ENCODE measurements at regions of chr1 and their contacts with region 1.

Region 1: DNA sequence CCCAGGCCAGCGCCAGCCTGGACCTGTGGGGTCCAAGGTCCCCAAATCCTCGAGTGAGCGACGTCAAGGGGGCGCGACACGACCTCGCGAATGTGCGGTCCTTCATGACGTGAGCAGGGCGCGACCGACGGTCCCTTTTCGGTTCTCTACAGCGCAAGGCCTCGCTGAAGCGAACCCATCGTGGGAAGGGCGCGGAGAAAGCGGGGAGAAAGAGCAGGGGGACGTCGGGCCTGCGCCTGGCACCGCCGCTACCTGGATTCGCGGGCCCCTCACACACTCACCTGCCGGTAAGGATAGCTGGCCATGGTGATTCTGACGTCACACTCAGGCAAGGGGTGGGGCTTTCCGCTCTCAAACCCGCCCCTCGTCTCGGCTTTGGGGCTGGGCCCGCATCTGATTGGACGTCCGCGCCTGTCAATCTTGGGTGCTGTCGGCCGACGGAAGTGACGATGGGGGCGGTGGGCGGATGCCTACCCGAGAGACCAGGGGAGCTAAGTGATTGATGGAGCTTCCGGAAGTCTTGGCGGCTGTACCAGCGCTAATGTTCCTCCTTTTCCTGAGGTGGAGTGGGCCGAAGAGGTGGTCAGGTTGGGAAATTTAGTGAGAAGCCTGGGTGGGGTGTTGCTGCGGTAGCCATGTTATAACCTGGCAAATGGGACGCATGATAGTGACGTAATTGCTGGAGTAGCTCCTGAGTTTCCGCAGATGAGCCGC is at the start of gene PEF1:
- DNase-seq: peak; percentile 99 to 100 (median 99)
- ATAC-seq: peak; percentile 91
- H3K4me3 ChIP-seq: peak within 1 kb of the TSS; percentile 92 to 97
- H3K4me3 Mint-ChIP-seq: peak within 1 kb of the TSS; percentile 100
- H3K27ac ChIP-seq: peak within 1 kb of the TSS; percentile 99
- H3K27ac Mint-ChIP-seq: peak within 1 kb of the TSS; percentile 100
- H3K4me1 ChIP-seq: peaks cover 30% of the 10 kb centered on the region
- H3K4me1 Mint-ChIP-seq: peaks cover 40% of the 10 kb centered on the region
- H3K27me3 ChIP-seq: no peaks in the 10 kb centered on the region
- H3K27me3 Mint-ChIP-seq: no peaks in the 10 kb centered on the region
- CTCF ChIP-seq: no peak
- total RNA-seq, gene PEF1: 35.8 to 36.6 TPM

Region 2: GRCh38 chr1:31065310-31066217 is 579.2 kb before region 1 on chr1 and contains the start of gene PUM1:
- CTCF ChIA-PET with region 1: no interaction called
- POLR2A ChIA-PET with region 1: no interaction called
- intact Hi-C with region 1: loop called in 1 of 2 experiments (anchors 10 kb)
- DNase-seq: peak; percentile 97 to 99 (median 98)
- ATAC-seq: peak; percentile 97
- H3K4me3 ChIP-seq: peak within 1 kb of the TSS; percentile 79
- H3K4me3 Mint-ChIP-seq: peak within 1 kb of the TSS; percentile 97
- H3K27ac ChIP-seq: peak within 1 kb of the TSS; percentile 83 to 94
- H3K27ac Mint-ChIP-seq: peak within 1 kb of the TSS; percentile 99
- H3K4me1 ChIP-seq: peaks cover 28% of the 10 kb centered on the region
- H3K4me1 Mint-ChIP-seq: peaks cover 27% of the 10 kb centered on the region
- H3K27me3 ChIP-seq: no peaks in the 10 kb centered on the region
- H3K27me3 Mint-ChIP-seq: no peaks in the 10 kb centered on the region
- CTCF ChIP-seq: no peak
- total RNA-seq, gene PUM1: 190 to 191 TPM

Region 3: DNA sequence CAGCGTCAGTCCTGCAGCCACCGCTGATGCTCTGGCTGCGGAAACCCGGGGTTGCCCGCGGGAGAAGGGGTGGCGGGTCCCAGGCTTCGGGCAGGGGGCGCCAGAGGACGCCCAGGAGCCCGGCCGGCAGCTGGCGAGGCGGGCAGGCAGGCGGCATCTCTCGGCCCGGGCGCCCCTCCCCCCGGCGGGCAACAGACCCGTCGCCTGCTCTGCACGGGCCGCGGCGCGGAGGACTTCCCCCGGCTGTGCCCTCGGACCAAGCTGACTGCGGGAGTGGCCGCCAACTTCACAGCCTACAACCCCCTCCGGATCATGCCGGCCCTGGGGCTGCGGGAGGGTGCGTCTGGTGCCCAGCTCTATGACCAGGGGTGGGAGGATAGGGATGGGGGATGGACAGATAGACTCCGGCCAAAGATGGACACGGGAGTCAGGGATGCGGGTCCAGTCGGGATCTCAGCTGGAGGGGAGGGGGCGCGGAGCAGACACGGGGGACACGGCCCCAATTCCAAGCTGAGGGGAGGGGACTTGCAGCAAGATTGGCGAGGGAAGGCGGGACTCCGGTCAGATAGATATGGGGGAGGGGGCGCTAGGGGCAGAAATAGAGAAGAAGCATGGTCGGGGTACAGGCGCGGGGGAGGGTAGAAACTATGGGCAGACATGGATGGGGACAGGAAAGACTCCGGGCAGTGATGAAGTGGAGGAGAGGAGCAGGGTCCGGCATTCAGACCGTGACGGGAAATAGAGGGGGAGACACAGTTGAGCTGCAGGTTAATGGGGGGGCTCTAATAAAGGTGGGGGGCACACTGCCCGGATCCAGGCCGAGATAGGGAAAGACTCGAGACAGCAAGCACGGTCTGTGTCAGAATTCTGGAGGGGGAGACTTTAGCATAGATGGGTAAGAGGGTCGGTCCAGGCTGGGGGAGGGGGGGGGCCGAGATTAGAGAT is 118.3 kb after region 1 on chr1:
- CTCF ChIA-PET with region 1: no interaction called
- POLR2A ChIA-PET with region 1: interaction called, 3 read pairs
- intact Hi-C with region 1: loop called (anchors 2 to 5 kb)
- DNase-seq: peak; percentile 39 to 86 (median 69)
- ATAC-seq: peak; percentile 43
- H3K4me3 ChIP-seq: peak overlapping the region; percentile 41 to 57
- H3K4me3 Mint-ChIP-seq: peak overlapping the region; percentile 80
- H3K27ac ChIP-seq: no peak overlapping the region
- H3K27ac Mint-ChIP-seq: no peak overlapping the region
- H3K4me1 ChIP-seq: peaks cover 40% of the 10 kb centered on the region
- H3K4me1 Mint-ChIP-seq: peaks cover 29% of the 10 kb centered on the region
- H3K27me3 ChIP-seq: peaks cover 11 to 14% of the 10 kb centered on the region in 2 experiments
- H3K27me3 Mint-ChIP-seq: peaks cover 11% of the 10 kb centered on the region
- CTCF ChIP-seq: peak; percentile 45

Region 4: DNA sequence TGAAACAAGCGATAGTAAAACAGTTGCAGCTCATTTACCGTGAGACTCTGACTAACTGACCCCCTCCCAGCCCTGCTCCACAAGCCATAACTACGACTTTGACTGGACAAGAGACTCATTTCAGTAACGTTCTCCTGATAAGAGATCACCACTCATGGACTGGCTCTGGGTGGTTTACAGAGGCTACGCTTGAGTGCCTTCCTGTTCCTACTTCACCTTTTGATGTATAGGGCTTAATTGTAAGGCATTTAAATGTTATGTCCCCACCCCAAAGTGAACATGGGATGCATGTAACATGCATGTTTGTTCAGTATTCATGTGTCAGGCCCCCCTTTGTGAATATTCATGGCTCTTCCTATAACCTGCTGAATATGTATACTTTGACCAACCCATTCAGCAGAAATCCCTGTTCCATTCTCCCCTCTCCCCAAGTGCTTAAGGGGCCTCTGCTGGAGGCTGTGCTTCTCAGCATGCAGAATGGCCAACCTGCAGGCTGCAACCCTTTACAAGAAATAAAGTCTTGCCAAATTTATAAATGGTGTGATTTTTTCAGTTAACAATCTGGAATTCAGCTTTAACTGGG is 221.8 kb after region 1 on chr1:
- CTCF ChIA-PET with region 1: no interaction called
- POLR2A ChIA-PET with region 1: no interaction called
- intact Hi-C with region 1: no loop called
- DNase-seq: no peak
- ATAC-seq: no peak
- H3K4me3 ChIP-seq: no peak overlapping the region
- H3K4me3 Mint-ChIP-seq: no peak overlapping the region
- H3K27ac ChIP-seq: no peak overlapping the region
- H3K27ac Mint-ChIP-seq: no peak overlapping the region
- H3K4me1 ChIP-seq: peaks cover 3% of the 10 kb centered on the region
- H3K4me1 Mint-ChIP-seq: peaks cover 25% of the 10 kb centered on the region
- H3K27me3 ChIP-seq: no peaks in the 10 kb centered on the region
- H3K27me3 Mint-ChIP-seq: no peaks in the 10 kb centered on the region
- CTCF ChIP-seq: no peak

Region 5: GRCh38 chr1:32200226-32201010 is 555.7 kb after region 1 on chr1 and contains the start of gene CCDC28B:
- CTCF ChIA-PET with region 1: no interaction called
- POLR2A ChIA-PET with region 1: no interaction called
- intact Hi-C with region 1: loop called in 1 of 2 experiments (anchors 2 kb)
- DNase-seq: peak in 8 of 9 experiments; percentile 32 to 81 (median 64)
- ATAC-seq: peak; percentile 49
- H3K4me3 ChIP-seq: peak within 1 kb of the TSS; percentile 69 to 70
- H3K4me3 Mint-ChIP-seq: peak within 1 kb of the TSS; percentile 85
- H3K27ac ChIP-seq: peak within 1 kb of the TSS; percentile 75 to 78
- H3K27ac Mint-ChIP-seq: peak within 1 kb of the TSS; percentile 97
- H3K4me1 ChIP-seq: peaks cover 46% of the 10 kb centered on the region
- H3K4me1 Mint-ChIP-seq: peaks cover 59% of the 10 kb centered on the region
- H3K27me3 ChIP-seq: no peaks in the 10 kb centered on the region
- H3K27me3 Mint-ChIP-seq: no peaks in the 10 kb centered on the region
- CTCF ChIP-seq: no peak
- total RNA-seq, gene CCDC28B: 3.8 to 5.2 TPM

Region 6: GRCh38 chr1:32650752-32651460 is 1006.2 kb after region 1 on chr1 and contains the start of gene RBBP4:
- CTCF ChIA-PET with region 1: no interaction called
- POLR2A ChIA-PET with region 1: no interaction called
- intact Hi-C with region 1: loop called in 1 of 2 experiments (anchors 2 kb)
- DNase-seq: peak; percentile 96 to 100 (median 99)
- ATAC-seq: peak; percentile 83
- H3K4me3 ChIP-seq: peak within 1 kb of the TSS; percentile 82 to 97
- H3K4me3 Mint-ChIP-seq: peak within 1 kb of the TSS; percentile 93
- H3K27ac ChIP-seq: peak within 1 kb of the TSS; percentile 98 to 99
- H3K27ac Mint-ChIP-seq: peak within 1 kb of the TSS; percentile 99
- H3K4me1 ChIP-seq: peaks cover 51% of the 10 kb centered on the region
- H3K4me1 Mint-ChIP-seq: peaks cover 60% of the 10 kb centered on the region
- H3K27me3 ChIP-seq: no peaks in the 10 kb centered on the region
- H3K27me3 Mint-ChIP-seq: no peaks in the 10 kb centered on the region
- CTCF ChIP-seq: no peak
- total RNA-seq, gene RBBP4: 109 to 121 TPM

Measured in CD8-positive, alpha-beta T cell (primary cell).